Right ventricle myocardium inferior (tissue), 1 donor: ENCODE measurements at regions of chr21 and their contacts with region 1.

Region 1: GRCh38 chr21:32727687-32728455 is at the start of gene SYNJ1:
- DNase-seq: peak; percentile 99
- ATAC-seq: peak; percentile 98
- total RNA-seq, gene SYNJ1: 11.1 TPM

Region 2: GRCh38 chr21:32770871-32771523 is 43.1 kb after region 1 on chr21:
- intact Hi-C with region 1: loop called (anchors 5 kb)
- DNase-seq: peak; percentile 85
- ATAC-seq: peak; percentile 53